Activated CD4-positive, alpha-beta memory T cell treated with anti-CD3 and anti-CD28 coated beads for 36 hours (primary cell): ENCODE measurements at regions of chr2 and their contacts with region 1.

Region 1: GRCh38 chr2:168434146-168434545 is 21.9 kb upstream of the CERS6 start:
- DNase-seq: no peak
- H3K4me3 Mint-ChIP-seq: no peak overlapping the region
- H3K27ac Mint-ChIP-seq: no peak overlapping the region
- H3K4me1 Mint-ChIP-seq: peaks cover 35% of the 10 kb centered on the region
- H3K27me3 Mint-ChIP-seq: no peaks in the 10 kb centered on the region

Region 2: DNA sequence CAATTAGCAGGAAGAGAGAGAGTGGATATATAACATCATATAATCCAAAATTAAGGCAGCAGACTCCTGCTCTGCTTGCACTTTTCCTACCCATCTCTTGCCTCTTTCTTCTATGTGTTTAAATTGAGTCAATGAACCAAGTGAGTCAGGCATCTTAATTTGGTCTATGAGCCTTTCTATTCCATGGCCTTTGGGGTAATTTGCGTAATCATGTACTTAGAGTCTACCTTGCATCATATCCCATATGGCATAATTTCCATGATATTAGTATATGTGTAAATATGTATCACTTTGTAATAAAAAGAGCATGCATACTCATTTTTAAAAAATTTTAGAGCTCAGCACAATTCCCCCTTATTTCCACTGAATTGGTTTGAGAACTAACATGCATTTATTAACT is 742.0 kb before region 1 on chr2:
- CTCF ChIA-PET with region 1: no interaction called
- POLR2A ChIA-PET with region 1: no interaction called
- intact Hi-C with region 1: no loop called
- DNase-seq: no peak
- H3K4me3 Mint-ChIP-seq: no peak overlapping the region
- H3K27ac Mint-ChIP-seq: no peak overlapping the region
- H3K4me1 Mint-ChIP-seq: no peaks in the 10 kb centered on the region
- H3K27me3 Mint-ChIP-seq: no peaks in the 10 kb centered on the region

Region 3: DNA sequence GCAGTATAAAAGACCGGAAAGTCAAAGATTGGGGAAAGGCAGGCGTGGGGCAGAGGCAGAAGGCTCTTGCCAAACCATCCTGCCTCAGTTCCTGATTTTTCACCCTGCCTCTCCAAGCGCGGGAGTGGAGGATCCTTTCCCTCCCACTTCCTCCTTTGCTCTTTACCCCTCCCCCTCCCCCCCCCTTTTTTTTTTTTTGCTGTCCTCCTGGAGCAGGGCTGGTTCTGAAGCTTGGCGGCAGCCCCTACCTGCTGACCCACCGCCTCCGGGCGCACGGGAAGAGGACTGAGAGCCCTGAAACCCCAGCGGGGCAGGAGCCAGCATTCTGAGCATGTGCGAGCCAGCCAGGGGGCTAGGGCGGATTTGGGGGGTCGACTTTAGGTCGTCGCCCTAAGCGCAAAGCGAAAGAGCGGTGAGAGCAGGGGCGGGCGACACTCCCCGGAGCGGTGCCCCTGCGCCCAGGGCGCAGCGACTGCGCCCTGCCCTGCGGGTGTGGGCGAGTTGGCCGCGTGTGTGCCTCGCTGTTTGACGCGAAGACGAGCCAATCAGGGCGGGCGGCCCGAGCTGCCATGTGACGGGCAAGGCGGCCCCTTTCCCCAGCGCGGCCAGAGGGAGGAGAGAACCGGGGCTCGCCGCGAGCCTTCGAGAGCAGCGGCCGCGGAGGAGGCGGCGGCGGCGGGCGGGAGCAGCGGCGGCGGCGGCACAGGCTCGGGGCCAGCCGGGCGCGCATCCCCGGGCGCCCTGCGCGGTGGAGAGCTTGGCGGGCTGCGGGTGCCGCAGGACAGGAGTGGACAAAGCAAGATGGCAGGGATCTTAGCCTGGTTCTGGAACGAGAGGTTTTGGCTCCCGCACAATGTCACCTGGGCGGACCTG is 21.7 kb after region 1 on chr2 and contains the start of gene CERS6:
- CTCF ChIA-PET with region 1: no interaction called
- POLR2A ChIA-PET with region 1: interaction called, 4 read pairs
- intact Hi-C with region 1: loop called (anchors 2 kb)
- DNase-seq: peak; percentile 93
- H3K4me3 Mint-ChIP-seq: no peak within 1 kb of the TSS
- H3K27ac Mint-ChIP-seq: peak within 1 kb of the TSS; percentile 31
- H3K4me1 Mint-ChIP-seq: peaks cover 28% of the 10 kb centered on the region
- H3K27me3 Mint-ChIP-seq: no peaks in the 10 kb centered on the region
- total RNA-seq, gene CERS6: 8.9 to 9.2 TPM

Region 4: GRCh38 chr2:168758970-168759820 is 325.0 kb after region 1 on chr2:
- CTCF ChIA-PET with region 1: no interaction called
- POLR2A ChIA-PET with region 1: no interaction called
- intact Hi-C with region 1: loop called (anchors 5 kb)
- DNase-seq: peak; percentile 21
- H3K4me3 Mint-ChIP-seq: no peak overlapping the region
- H3K27ac Mint-ChIP-seq: no peak overlapping the region
- H3K4me1 Mint-ChIP-seq: peaks cover 39% of the 10 kb centered on the region
- H3K27me3 Mint-ChIP-seq: no peaks in the 10 kb centered on the region